HAP-1 (cell line): ENCODE measurements at regions of chr17 and their contacts with region 1.

Region 1: GRCh38 chr17:58006924-58007780 is at the start of gene SRSF1:
- DNase-seq: peak; percentile 94 to 97
- H3K4me3 ChIP-seq: peak within 1 kb of the TSS; percentile 96
- H3K4me1 ChIP-seq: peaks cover 24% of the 10 kb centered on the region
- H3K27me3 ChIP-seq: no peaks in the 10 kb centered on the region

Region 2: DNA sequence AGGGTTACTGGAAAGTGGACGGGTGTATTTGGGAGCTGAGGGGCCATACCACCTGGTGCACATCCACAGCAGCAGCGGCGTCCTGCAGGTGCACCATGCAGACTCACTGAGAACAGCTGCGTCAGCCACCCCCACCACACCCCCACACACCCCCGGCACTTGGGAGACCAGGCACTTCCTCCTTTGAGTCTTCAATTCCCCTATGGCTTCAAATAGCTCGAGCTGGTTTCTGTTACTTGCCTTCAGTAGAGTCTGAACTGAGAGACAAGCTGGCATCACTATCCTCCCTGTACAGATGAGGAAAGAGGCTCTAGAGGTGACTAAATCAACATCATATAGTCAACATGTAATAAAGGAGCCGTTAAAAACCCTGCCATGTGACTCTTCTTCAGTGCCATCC is 67.4 kb before region 1 on chr17:
- in situ Hi-C with region 1: no loop called
- DNase-seq: no peak
- H3K4me3 ChIP-seq: no peak overlapping the region
- H3K4me1 ChIP-seq: peaks cover 16% of the 10 kb centered on the region
- H3K27me3 ChIP-seq: no peaks in the 10 kb centered on the region

Region 3: GRCh38 chr17:58096892-58097291 is 89.7 kb after region 1 on chr17:
- in situ Hi-C with region 1: no loop called
- DNase-seq: no peak
- H3K4me3 ChIP-seq: no peak overlapping the region
- H3K4me1 ChIP-seq: no peaks in the 10 kb centered on the region
- H3K27me3 ChIP-seq: no peaks in the 10 kb centered on the region

Region 4: GRCh38 chr17:58112970-58113631 is 105.9 kb after region 1 on chr17:
- in situ Hi-C with region 1: loop called (anchors 10 kb)
- DNase-seq: peak; percentile 64 to 90
- H3K4me3 ChIP-seq: no peak overlapping the region
- H3K4me1 ChIP-seq: no peaks in the 10 kb centered on the region
- H3K27me3 ChIP-seq: no peaks in the 10 kb centered on the region